ENCODE measurements at regions of chr1 and their contacts with region 1.

Region 1: DNA sequence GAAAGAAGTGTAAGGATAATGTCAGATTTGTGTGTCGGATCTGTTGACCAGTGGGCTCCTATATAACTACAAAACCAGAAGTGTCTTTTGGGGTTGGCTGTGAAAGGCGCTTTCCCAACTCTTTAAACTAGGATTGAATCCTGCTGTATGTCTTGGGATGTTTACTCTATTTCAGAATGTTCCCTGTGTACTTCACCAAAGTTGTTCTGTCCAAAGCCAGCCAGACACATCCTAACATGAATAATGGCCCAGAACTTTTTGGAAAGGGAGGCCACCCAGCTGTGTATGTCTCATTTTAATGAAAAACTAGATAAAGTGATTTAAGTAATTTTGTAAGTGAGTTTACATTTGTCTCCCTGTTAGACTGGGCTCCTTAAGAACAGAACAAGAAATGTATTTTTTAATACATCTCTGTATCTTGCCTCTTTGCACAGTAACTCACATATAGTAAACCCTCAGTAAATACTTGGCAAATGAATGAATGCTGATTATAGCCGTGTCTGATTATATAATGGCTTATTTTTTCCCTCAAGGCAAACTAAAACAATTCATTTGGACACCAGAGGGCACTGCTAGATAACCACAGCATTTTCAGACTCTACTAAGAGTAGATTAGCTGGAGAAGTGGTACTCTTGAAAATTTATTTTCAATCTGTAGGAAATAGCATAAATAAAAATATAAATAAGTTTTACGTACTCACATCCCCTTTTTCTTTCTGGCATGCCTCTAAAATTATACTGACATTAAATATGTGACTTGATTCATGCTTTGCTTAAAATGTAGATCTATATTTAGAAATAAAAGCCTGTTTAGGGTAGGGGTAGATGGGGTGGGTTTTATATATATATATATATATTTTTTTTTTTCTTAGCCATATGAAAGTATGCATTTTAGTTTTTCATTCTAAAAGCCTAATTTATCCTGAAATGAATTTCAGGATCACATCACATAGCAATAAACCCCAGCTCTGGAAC is 23.8 kb downstream of the TSEN15 start:
- DNase-seq: peak; percentile 32
- H3K4me3 Mint-ChIP-seq: no peak overlapping the region
- H3K27ac Mint-ChIP-seq: no peak overlapping the region
- H3K4me1 Mint-ChIP-seq: no peaks in the 10 kb centered on the region
- H3K27me3 Mint-ChIP-seq: no peaks in the 10 kb centered on the region

Region 2: GRCh38 chr1:184101141-184101540 is 25.8 kb after region 1 on chr1:
- CTCF ChIA-PET with region 1: no interaction called
- DNase-seq: no peak
- H3K4me3 Mint-ChIP-seq: no peak overlapping the region
- H3K27ac Mint-ChIP-seq: no peak overlapping the region
- H3K4me1 Mint-ChIP-seq: no peaks in the 10 kb centered on the region
- H3K27me3 Mint-ChIP-seq: no peaks in the 10 kb centered on the region

Region 3: DNA sequence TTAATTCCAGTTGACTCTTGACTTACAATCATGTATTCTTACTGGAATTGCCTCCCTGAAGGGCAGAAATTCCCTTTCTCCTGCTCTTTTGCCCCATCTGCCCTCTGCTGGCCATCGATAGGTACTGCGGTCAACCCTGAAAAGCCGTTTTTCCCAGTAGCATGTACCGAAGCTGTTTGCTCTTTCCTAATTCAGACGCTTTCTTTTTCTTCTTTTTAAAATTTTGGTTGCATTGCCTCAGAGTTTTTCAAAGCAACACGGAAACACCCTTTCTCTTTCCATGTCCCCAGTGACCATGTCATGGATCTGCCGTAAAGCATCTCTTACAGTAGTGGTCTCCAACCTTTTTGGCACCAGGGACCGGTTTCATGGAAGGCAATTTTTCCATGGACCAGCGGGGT is 147.3 kb after region 1 on chr1:
- CTCF ChIA-PET with region 1: interaction called, 32 read pairs
- DNase-seq: peak; percentile 44
- H3K4me3 Mint-ChIP-seq: no peak overlapping the region
- H3K27ac Mint-ChIP-seq: no peak overlapping the region
- H3K4me1 Mint-ChIP-seq: no peaks in the 10 kb centered on the region
- H3K27me3 Mint-ChIP-seq: peaks cover 6% of the 10 kb centered on the region

Region 4: DNA sequence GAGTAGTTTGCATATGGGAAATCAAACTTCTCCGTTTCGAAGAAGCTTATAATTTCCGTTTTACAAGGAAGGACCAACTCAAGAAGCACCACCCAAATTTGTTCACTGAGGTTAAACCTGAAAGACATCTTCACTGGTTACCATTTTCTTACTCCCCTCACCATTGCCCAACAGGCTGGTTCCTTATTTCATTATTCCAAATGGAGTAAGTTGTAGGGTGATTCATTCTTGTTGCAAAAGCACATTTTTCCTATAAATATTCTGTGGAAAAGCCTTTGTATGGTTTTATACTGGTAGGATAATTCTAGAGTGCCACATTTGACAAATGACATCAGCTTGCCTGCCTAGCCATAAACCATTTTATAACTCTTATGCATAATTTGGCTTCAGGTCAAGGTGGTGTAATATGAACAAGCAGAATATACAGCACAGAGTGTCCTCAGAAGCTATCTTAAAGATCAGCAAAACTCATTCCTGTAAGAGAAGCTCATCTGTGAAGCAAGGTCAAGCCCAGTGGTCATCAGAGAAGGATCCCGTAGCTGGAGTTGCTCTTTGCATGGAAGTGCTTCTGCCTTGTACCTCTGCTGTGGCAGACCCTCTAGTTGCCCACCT is 287.4 kb after region 1 on chr1:
- CTCF ChIA-PET with region 1: no interaction called
- DNase-seq: no peak
- H3K4me3 Mint-ChIP-seq: no peak overlapping the region
- H3K27ac Mint-ChIP-seq: no peak overlapping the region
- H3K4me1 Mint-ChIP-seq: no peaks in the 10 kb centered on the region
- H3K27me3 Mint-ChIP-seq: peaks cover 12% of the 10 kb centered on the region

Region 5: GRCh38 chr1:184626076-184627006 is 551.0 kb after region 1 on chr1:
- CTCF ChIA-PET with region 1: no interaction called
- DNase-seq: no peak
- H3K4me3 Mint-ChIP-seq: no peak overlapping the region
- H3K27ac Mint-ChIP-seq: no peak overlapping the region
- H3K4me1 Mint-ChIP-seq: no peaks in the 10 kb centered on the region
- H3K27me3 Mint-ChIP-seq: peaks cover 13% of the 10 kb centered on the region

Measured in activated naive CD4-positive, alpha-beta T cell treated with anti-CD3 and anti-CD28 coated beads, Interleukin-2, amount 10 ng/mL, durations not matched to agents 7 days and 5 days (primary cell).